ENCODE measurements at regions of chr16 and their contacts with region 1.

Region 1: DNA sequence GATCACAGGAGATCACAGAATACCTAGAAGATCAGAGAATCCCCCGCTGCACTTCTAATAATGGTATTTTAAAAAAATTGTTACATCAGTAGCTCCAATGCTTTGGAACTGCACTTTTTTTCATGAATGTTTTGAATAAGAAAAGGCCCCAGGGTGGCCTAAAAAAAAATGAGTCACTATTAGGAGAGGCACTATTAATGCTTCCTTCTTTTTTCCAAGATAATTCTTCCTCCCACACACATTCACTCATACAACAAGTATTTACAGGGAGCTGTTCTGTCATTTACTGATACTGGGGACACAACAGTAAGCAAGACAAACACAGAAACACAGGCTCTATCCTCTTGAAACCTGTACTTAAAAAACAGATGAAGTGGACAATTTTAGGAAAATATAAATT is 675 bp upstream of the PDZD9 start:
- DNase-seq: no peak
- ATAC-seq: peak in 1 of 4 donors; percentile 21
- H3K4me3 ChIP-seq: no peak overlapping the region
- H3K27ac ChIP-seq: no peak overlapping the region
- H3K4me1 ChIP-seq: peaks cover 0 to 3% (median 0%) of the 10 kb centered on the region in 4 donors
- H3K27me3 ChIP-seq: no peaks in the 10 kb centered on the region
- CTCF ChIP-seq: no peak
- POLR2A ChIP-seq: no peak

Region 2: GRCh38 chr16:22077700-22078313 is 76.2 kb after region 1 on chr16:
- intact Hi-C with region 1: loop called (anchors 5 kb)
- DNase-seq: peak in 2 of 3 donors; percentile 42 to 61
- ATAC-seq: peak; percentile 83 to 92 (median 86)
- H3K4me3 ChIP-seq: no peak overlapping the region
- H3K27ac ChIP-seq: no peak overlapping the region
- H3K4me1 ChIP-seq: no peaks in the 10 kb centered on the region
- H3K27me3 ChIP-seq: no peaks in the 10 kb centered on the region
- CTCF ChIP-seq: peak; percentile 70 to 85 (median 81)
- POLR2A ChIP-seq: no peak

Measured in right lobe of liver (tissue), 6 donors.